IMR-90 (cell line): ENCODE measurements at regions of chr2 and their contacts with region 1.

Region 1: GRCh38 chr2:64914735-64915509 is 74.3 kb upstream of the SLC1A4 start:
- DNase-seq: peak; percentile 68
- ATAC-seq: no peak; the same call in 1 of the 2 replicates
- H3K4me3 ChIP-seq: no peak overlapping the region
- H3K27ac ChIP-seq: no peak overlapping the region
- H3K4me1 ChIP-seq: no peaks in the 10 kb centered on the region
- H3K27me3 ChIP-seq: peaks cover 29% of the 10 kb centered on the region
- CTCF ChIP-seq: no peak
- POLR2A ChIP-seq: no peak
- RAD21 ChIP-seq: no peak

Region 2: GRCh38 chr2:64988420-64989125 is 73.7 kb after region 1 on chr2:
- CTCF ChIA-PET with region 1: no interaction called
- POLR2A ChIA-PET with region 1: no interaction called
- dilution Hi-C with region 1: no loop called
- in situ Hi-C with region 1: no loop called
- intact Hi-C with region 1: loop called (anchors 1 kb)
- DNase-seq: peak; percentile 89
- ATAC-seq: peak; percentile 80
- H3K4me3 ChIP-seq: peak overlapping the region; percentile 64
- H3K27ac ChIP-seq: peak overlapping the region; percentile 84
- H3K4me1 ChIP-seq: peaks cover 10% of the 10 kb centered on the region
- H3K27me3 ChIP-seq: no peaks in the 10 kb centered on the region
- CTCF ChIP-seq: peak; percentile 42
- POLR2A ChIP-seq: peak; percentile 93
- RAD21 ChIP-seq: peak; percentile 12; the same call in 1 of the 2 replicates

Region 3: GRCh38 chr2:65040400-65041261 is 125.7 kb after region 1 on chr2:
- CTCF ChIA-PET with region 1: interaction called, 5 read pairs
- POLR2A ChIA-PET with region 1: no interaction called
- dilution Hi-C with region 1: no loop called
- in situ Hi-C with region 1: loop called (anchors 5 kb)
- intact Hi-C with region 1: loop called (anchors 1 kb)
- DNase-seq: peak; percentile 84
- ATAC-seq: peak; percentile 100
- H3K4me3 ChIP-seq: peak overlapping the region; percentile 26; the same call in 1 of the 2 replicates
- H3K27ac ChIP-seq: no peak overlapping the region
- H3K4me1 ChIP-seq: no peaks in the 10 kb centered on the region
- H3K27me3 ChIP-seq: no peaks in the 10 kb centered on the region
- CTCF ChIP-seq: peak; percentile 89
- POLR2A ChIP-seq: no peak
- RAD21 ChIP-seq: peak; percentile 93

Region 4: DNA sequence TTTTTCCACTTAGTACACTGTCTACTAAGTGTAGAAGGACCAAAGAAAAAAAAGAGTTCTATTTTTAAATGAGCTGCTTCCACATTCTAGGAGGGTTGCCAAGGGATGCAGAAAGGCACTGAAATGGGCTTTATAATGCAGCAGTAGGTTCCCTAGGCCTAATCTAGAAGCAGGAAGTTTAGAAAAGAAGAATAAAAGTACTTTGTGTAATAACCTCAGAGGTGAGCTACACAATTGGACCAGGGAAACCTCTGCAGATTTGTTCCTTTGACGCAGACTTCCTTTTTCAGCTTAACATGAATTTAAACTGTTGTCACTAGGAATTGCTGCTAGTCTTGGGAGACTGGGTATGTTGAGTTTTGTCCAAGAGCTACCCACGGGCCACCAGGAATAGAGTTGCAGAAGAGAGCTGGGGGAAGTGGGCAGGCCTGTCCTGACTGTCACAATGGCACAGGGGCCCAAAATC is 249.5 kb after region 1 on chr2:
- CTCF ChIA-PET with region 1: no interaction called
- POLR2A ChIA-PET with region 1: no interaction called
- dilution Hi-C with region 1: no loop called
- in situ Hi-C with region 1: loop called (anchors 25 kb)
- intact Hi-C with region 1: loop called (anchors 2 kb)
- DNase-seq: peak; percentile 19
- ATAC-seq: no peak
- H3K4me3 ChIP-seq: no peak overlapping the region
- H3K27ac ChIP-seq: no peak overlapping the region
- H3K4me1 ChIP-seq: no peaks in the 10 kb centered on the region
- H3K27me3 ChIP-seq: peaks cover 6% of the 10 kb centered on the region
- CTCF ChIP-seq: no peak
- POLR2A ChIP-seq: no peak
- RAD21 ChIP-seq: no peak

Region 5: GRCh38 chr2:65169760-65170136 is 254.8 kb after region 1 on chr2:
- CTCF ChIA-PET with region 1: no interaction called
- POLR2A ChIA-PET with region 1: no interaction called
- dilution Hi-C with region 1: no loop called
- in situ Hi-C with region 1: loop called (anchors 25 kb)
- intact Hi-C with region 1: loop called (anchors 2 kb)
- DNase-seq: no peak
- ATAC-seq: no peak
- H3K4me3 ChIP-seq: no peak overlapping the region
- H3K27ac ChIP-seq: no peak overlapping the region
- H3K4me1 ChIP-seq: no peaks in the 10 kb centered on the region
- H3K27me3 ChIP-seq: peaks cover 3% of the 10 kb centered on the region; the same call in 1 of the 2 replicates
- CTCF ChIP-seq: no peak
- POLR2A ChIP-seq: no peak
- RAD21 ChIP-seq: no peak

Region 6: GRCh38 chr2:65186872-65187851 is 272.2 kb after region 1 on chr2:
- CTCF ChIA-PET with region 1: no interaction called
- POLR2A ChIA-PET with region 1: no interaction called
- dilution Hi-C with region 1: no loop called
- in situ Hi-C with region 1: no loop called
- intact Hi-C with region 1: loop called (anchors 5 kb)
- DNase-seq: peak; percentile 75
- ATAC-seq: peak; percentile 99
- H3K4me3 ChIP-seq: no peak overlapping the region
- H3K27ac ChIP-seq: no peak overlapping the region
- H3K4me1 ChIP-seq: peaks cover 3% of the 10 kb centered on the region; the same call in 1 of the 2 replicates
- H3K27me3 ChIP-seq: peaks cover 2% of the 10 kb centered on the region; the same call in 1 of the 2 replicates
- CTCF ChIP-seq: peak; percentile 82
- POLR2A ChIP-seq: no peak
- RAD21 ChIP-seq: peak; percentile 74